HAP-1 (cell line): ENCODE measurements at regions of chr1 and their contacts with region 1.

Region 1: DNA sequence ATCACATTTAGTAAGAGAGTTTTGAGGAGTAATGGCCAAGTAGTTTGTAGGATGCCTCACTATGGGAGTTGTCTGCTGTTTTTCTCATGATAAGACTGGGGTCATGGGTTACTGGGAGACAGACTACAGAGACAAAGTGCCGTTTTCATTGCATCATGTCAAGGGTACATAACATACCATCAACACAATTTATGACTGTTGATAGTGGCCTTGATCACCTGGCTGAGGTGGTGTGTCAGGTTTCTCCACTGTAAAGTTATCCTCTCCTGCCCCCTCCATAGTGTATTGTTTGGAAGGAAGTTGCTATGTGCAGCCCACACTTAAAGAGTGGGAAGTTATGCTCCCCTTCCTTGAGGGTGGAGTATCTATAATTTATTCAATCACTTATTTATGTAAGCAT is 263.5 kb upstream of the POU3F1 start:
- DNase-seq: no peak
- H3K4me3 ChIP-seq: no peak overlapping the region
- H3K4me1 ChIP-seq: no peaks in the 10 kb centered on the region
- H3K27me3 ChIP-seq: peaks cover 21% of the 10 kb centered on the region; the same call in 1 of the 2 replicates

Region 2: GRCh38 chr1:38370716-38371504 is 60.8 kb after region 1 on chr1:
- in situ Hi-C with region 1: loop called (anchors 10 kb)
- DNase-seq: peak; percentile 59 to 77
- H3K4me3 ChIP-seq: no peak overlapping the region
- H3K4me1 ChIP-seq: peaks cover 9% of the 10 kb centered on the region
- H3K27me3 ChIP-seq: peaks cover 17% of the 10 kb centered on the region